CD8-positive, alpha-beta T cell (primary cell): ENCODE measurements at regions of chr11 and their contacts with region 1.

Region 1: DNA sequence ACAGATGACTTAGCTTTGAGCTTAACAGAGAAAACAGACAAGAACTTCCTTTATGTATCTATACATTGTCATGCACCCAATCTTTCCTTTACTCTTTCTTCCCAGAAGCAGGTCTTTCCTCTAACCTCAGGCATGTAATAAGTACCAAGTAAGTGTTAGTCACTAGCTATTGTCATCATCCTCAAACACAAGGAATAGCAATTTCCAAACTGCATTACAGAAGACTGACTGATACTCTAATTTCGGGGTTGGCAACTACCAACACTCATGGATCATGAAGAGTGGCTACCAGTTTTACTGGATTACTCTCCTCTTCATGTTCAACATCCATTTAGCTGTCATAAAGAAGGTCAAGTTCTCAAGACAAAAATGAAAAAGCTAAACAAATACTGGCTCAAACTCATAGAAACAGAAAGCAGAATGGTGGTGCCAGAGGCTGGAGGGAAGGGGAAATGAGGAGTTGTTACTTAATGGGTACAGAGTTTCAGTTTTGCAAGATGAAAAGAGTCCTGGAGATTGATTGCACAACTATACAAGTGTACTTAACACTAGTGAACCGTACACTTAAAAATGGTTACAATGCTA is 111.6 kb downstream of the SIK3 start:
- DNase-seq: peak in 1 of 9 experiments; percentile 48
- ATAC-seq: peak; percentile 20
- H3K4me3 ChIP-seq: no peak overlapping the region
- H3K4me3 Mint-ChIP-seq: peak overlapping the region; percentile 19
- H3K27ac ChIP-seq: peak overlapping the region in 1 of 2 experiments; percentile 36
- H3K27ac Mint-ChIP-seq: peak overlapping the region; percentile 3
- H3K4me1 ChIP-seq: peaks cover 36% of the 10 kb centered on the region
- H3K4me1 Mint-ChIP-seq: peaks cover 68% of the 10 kb centered on the region
- H3K27me3 ChIP-seq: no peaks in the 10 kb centered on the region
- H3K27me3 Mint-ChIP-seq: no peaks in the 10 kb centered on the region
- CTCF ChIP-seq: no peak

Region 2: DNA sequence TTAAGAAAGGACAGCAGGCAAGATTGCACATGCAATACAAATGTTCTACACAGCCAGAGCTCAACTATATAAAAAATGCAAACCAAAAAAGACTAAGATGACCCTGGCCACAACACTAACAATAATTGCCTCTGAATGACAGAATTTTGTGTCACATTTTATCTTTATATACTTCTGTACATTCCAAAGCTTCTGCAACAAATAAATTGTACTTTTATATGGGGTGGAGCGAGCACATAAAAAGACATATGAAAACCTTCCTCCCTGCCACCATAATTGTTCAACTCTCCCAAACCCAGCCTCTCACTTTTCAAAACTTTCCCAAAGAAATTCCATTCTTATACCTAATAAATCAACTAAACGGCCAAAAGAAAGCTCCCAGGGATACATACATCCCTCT is 224.5 kb before region 1 on chr11:
- CTCF ChIA-PET with region 1: no interaction called
- POLR2A ChIA-PET with region 1: no interaction called
- intact Hi-C with region 1: no loop called
- DNase-seq: no peak
- ATAC-seq: no peak
- H3K4me3 ChIP-seq: no peak overlapping the region
- H3K4me3 Mint-ChIP-seq: no peak overlapping the region
- H3K27ac ChIP-seq: no peak overlapping the region
- H3K27ac Mint-ChIP-seq: no peak overlapping the region
- H3K4me1 ChIP-seq: no peaks in the 10 kb centered on the region
- H3K4me1 Mint-ChIP-seq: peaks cover 9% of the 10 kb centered on the region
- H3K27me3 ChIP-seq: no peaks in the 10 kb centered on the region
- H3K27me3 Mint-ChIP-seq: no peaks in the 10 kb centered on the region
- CTCF ChIP-seq: no peak

Region 3: GRCh38 chr11:117064275-117064674 is 77.7 kb after region 1 on chr11:
- CTCF ChIA-PET with region 1: no interaction called
- POLR2A ChIA-PET with region 1: no interaction called
- intact Hi-C with region 1: loop called in 1 of 2 experiments (anchors 5 kb)
- DNase-seq: no peak
- ATAC-seq: no peak
- H3K4me3 ChIP-seq: no peak overlapping the region
- H3K4me3 Mint-ChIP-seq: no peak overlapping the region
- H3K27ac ChIP-seq: no peak overlapping the region
- H3K27ac Mint-ChIP-seq: no peak overlapping the region
- H3K4me1 ChIP-seq: peaks cover 9% of the 10 kb centered on the region
- H3K4me1 Mint-ChIP-seq: peaks cover 70% of the 10 kb centered on the region
- H3K27me3 ChIP-seq: no peaks in the 10 kb centered on the region
- H3K27me3 Mint-ChIP-seq: no peaks in the 10 kb centered on the region
- CTCF ChIP-seq: no peak

Region 4: DNA sequence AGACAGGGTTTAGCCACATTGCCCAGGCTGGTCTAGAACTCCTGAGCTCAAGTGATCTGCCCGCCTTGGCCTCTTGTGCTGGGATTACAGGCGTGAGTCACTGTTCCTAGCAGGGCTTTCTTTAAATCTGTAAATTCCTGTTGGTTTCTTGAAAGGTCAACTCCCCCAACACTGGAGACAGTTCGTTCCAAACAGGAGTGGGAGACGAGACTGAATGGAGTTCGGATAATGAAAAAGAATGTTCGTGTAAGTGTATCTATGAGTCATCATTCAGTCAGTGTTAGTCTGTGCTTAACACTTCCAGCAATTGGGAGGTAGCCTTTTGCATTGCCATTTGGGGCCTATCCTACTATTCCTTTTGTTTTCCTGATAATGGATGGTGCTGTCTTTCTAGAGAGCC is 294.5 kb after region 1 on chr11:
- CTCF ChIA-PET with region 1: no interaction called
- POLR2A ChIA-PET with region 1: no interaction called
- intact Hi-C with region 1: no loop called
- DNase-seq: no peak
- ATAC-seq: no peak
- H3K4me3 ChIP-seq: no peak overlapping the region
- H3K4me3 Mint-ChIP-seq: peak overlapping the region; percentile 66
- H3K27ac ChIP-seq: no peak overlapping the region
- H3K27ac Mint-ChIP-seq: peak overlapping the region; percentile 22
- H3K4me1 ChIP-seq: no peaks in the 10 kb centered on the region
- H3K4me1 Mint-ChIP-seq: peaks cover 13% of the 10 kb centered on the region
- H3K27me3 ChIP-seq: no peaks in the 10 kb centered on the region
- H3K27me3 Mint-ChIP-seq: no peaks in the 10 kb centered on the region
- CTCF ChIP-seq: no peak